ENCODE measurements at regions of chr6 and their contacts with region 1.

Region 1: DNA sequence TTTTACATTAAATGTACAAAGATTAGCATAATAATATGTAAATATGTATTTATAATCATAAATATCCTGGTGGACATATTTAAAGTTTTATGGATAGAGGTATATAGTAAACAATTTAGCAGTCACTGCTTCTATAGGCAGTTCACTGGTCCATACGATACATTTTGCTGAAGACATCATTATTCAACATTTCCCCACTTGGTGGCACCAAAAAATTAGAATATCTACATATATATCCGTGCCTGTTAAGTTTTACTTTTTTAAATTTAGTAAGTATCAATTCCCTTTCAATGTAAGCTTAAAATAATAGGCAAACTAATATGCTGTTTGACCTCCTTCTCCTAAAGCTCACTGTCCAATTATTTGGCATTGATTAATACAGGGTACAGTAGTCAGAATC is 64.2 kb downstream of the LMBRD1 start:
- DNase-seq: peak; percentile 38
- ATAC-seq: peak; percentile 42
- H3K4me3 ChIP-seq: no peak overlapping the region
- H3K27ac ChIP-seq: no peak overlapping the region
- H3K4me1 ChIP-seq: no peaks in the 10 kb centered on the region
- H3K27me3 ChIP-seq: no peaks in the 10 kb centered on the region
- CTCF ChIP-seq: peak; percentile 46; the same call in 1 of the 2 replicates

Region 2: GRCh38 chr6:69179681-69180080 is 553.0 kb before region 1 on chr6:
- CTCF ChIA-PET with region 1: no interaction called
- POLR2A ChIA-PET with region 1: no interaction called
- intact Hi-C with region 1: no loop called
- DNase-seq: no peak
- ATAC-seq: no peak
- H3K4me3 ChIP-seq: no peak overlapping the region
- H3K27ac ChIP-seq: no peak overlapping the region
- H3K4me1 ChIP-seq: no peaks in the 10 kb centered on the region
- H3K27me3 ChIP-seq: no peaks in the 10 kb centered on the region
- CTCF ChIP-seq: no peak

Region 3: DNA sequence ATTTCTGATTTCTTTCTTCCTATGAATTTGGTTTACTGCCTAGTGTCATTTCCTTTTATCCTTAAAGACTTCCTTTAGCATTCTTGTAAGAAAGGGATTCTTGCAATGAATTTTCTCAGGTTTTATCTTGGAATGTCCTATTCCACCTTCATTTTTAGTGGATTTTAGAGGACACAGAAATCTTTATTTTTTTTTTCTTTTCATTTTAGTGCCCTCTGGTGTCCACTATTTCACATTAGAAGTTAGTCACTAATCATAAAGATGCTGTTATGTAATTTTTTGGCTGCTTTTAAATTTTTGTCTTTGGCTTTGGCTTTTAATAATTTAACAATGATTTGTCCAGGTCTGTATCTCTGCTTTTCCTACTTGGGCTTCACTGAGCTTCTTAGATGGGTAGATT is 36.0 kb after region 1 on chr6:
- CTCF ChIA-PET with region 1: no interaction called
- POLR2A ChIA-PET with region 1: no interaction called
- intact Hi-C with region 1: loop called (anchors 5 kb)
- DNase-seq: peak; percentile 11
- ATAC-seq: no peak
- H3K4me3 ChIP-seq: no peak overlapping the region
- H3K27ac ChIP-seq: no peak overlapping the region
- H3K4me1 ChIP-seq: no peaks in the 10 kb centered on the region
- H3K27me3 ChIP-seq: no peaks in the 10 kb centered on the region
- CTCF ChIP-seq: peak; percentile 56; the same call in 1 of the 2 replicates

Region 4: DNA sequence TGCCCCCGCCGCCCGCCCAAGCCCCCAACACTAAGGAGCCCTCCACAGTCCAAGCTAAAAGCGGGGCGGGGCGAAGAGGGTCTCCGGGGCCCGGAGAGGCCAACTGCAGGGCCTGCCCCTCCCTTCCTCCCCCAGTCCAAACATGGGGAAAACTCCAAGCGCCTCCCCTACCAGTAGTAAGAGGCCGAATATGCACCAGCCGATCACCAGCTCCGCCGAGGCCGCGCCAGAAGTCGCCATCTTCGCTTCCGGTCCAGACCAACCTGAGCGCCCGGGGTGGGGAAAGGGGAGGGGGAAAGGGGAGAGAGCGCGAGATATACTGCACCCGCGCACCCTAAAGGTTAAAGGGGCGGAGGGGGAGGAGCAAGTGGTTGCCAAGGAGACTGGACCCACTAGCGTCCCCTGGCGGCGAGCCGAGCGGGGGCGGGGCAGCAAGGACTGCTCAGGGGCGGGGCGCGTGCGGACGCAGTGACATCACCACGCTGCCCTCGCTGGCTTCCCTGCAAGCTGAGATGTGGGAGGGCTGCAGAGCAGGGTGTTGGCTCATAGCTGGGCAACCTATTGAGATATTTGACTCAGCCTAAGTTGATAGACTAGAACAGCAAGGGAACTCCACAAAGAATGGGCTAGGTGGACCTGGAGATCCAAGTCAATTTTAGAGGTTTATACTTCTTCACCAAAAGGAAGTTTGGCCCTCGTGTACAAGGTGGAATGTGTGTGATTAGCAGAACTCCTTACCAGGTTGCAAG is 64.2 kb after region 1 on chr6 and contains the start of gene LMBRD1:
- CTCF ChIA-PET with region 1: interaction called, 5 read pairs
- POLR2A ChIA-PET with region 1: no interaction called
- intact Hi-C with region 1: loop called (anchors 5 kb)
- DNase-seq: peak; percentile 90
- ATAC-seq: peak; percentile 95
- H3K4me3 ChIP-seq: peak within 1 kb of the TSS; percentile 81
- H3K27ac ChIP-seq: peak within 1 kb of the TSS; percentile 61
- H3K4me1 ChIP-seq: peaks cover 3% of the 10 kb centered on the region; the same call in 1 of the 2 replicates
- H3K27me3 ChIP-seq: no peaks in the 10 kb centered on the region
- CTCF ChIP-seq: peak; percentile 73
- total RNA-seq, gene LMBRD1: 5.4 and 5.6 TPM in 2 replicates

Region 5: DNA sequence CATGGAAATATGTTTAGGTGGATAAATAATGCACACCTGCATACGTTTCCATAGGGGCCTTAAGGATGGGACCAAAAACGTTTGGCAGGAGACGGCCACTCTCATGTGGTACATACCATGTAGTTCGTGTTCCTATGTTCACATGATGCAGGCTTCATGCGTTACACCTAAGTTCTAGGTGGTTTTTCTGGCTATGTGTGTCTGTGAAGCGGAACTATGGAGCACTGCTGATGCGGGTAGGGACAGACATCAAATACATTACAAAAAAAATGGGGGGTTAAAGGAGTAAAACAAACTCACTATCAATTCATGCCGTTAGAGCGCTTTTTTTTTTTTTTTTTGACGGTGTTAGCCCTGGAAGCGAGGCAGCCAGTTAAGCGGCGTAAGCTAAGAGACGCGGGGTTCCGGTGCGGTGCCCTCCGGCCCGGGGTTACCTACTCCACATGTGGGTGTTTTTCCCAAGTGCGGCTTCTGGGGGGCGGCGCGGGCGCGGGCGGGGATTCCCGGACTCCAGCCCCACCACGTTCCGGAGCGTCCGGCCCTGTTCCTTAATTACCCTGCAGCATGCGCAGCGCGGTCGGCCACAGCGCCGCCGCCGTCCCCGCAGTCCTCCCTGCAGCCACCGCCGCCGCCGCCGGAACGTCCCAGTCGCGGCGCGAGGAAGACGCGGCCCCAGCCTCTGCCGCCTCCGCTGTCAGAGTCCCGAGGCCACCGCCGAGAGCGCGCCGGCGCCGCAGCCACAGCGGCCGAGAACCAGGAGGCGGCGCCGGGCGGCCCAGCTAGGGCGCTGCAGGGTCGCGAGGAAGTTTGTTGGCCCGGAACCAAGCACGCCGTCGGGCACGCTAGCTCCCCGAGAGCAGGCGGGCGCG is 134.4 kb after region 1 on chr6:
- CTCF ChIA-PET with region 1: no interaction called
- POLR2A ChIA-PET with region 1: no interaction called
- intact Hi-C with region 1: loop called (anchors 10 kb)
- DNase-seq: peak; percentile 5
- ATAC-seq: peak; percentile 72
- H3K4me3 ChIP-seq: peak overlapping the region; percentile 59
- H3K27ac ChIP-seq: no peak overlapping the region
- H3K4me1 ChIP-seq: peaks cover 9% of the 10 kb centered on the region
- H3K27me3 ChIP-seq: peaks cover 52% of the 10 kb centered on the region
- CTCF ChIP-seq: peak; percentile 11; the same call in 1 of the 2 replicates

Region 6: DNA sequence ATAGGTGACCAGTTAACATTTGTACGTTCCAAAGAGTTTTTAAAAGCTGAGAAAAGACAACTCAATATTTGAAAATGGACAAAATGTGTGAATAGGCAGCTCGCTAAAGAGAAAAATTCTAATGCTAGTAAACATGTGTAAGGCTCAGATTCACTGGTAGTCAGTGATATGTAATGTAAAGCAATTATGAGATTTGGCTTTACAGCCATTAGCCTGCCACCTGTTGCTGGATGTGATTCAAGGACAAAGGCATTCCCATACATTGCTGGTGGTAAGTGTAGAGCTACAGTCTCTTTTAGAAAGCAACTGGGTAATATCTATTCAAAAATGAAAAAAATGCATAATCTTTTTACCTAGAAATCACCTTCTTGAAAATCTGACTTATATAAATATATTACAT is 248.0 kb after region 1 on chr6:
- CTCF ChIA-PET with region 1: no interaction called
- POLR2A ChIA-PET with region 1: no interaction called
- intact Hi-C with region 1: loop called (anchors 5 kb)
- DNase-seq: no peak
- ATAC-seq: no peak
- H3K4me3 ChIP-seq: no peak overlapping the region
- H3K27ac ChIP-seq: no peak overlapping the region
- H3K4me1 ChIP-seq: no peaks in the 10 kb centered on the region
- H3K27me3 ChIP-seq: no peaks in the 10 kb centered on the region
- CTCF ChIP-seq: no peak

Region 7: GRCh38 chr6:70107852-70108629 is 375.4 kb after region 1 on chr6:
- CTCF ChIA-PET with region 1: no interaction called
- POLR2A ChIA-PET with region 1: no interaction called
- intact Hi-C with region 1: loop called (anchors 1 kb)
- DNase-seq: peak; percentile 54
- ATAC-seq: no peak
- H3K4me3 ChIP-seq: no peak overlapping the region
- H3K27ac ChIP-seq: no peak overlapping the region
- H3K4me1 ChIP-seq: no peaks in the 10 kb centered on the region
- H3K27me3 ChIP-seq: peaks cover 14% of the 10 kb centered on the region; the same call in 1 of the 2 replicates
- CTCF ChIP-seq: peak; percentile 69

Measured in PC-3 (cell line).